Naive thymus-derived CD8-positive, alpha-beta T cell (primary cell): ENCODE measurements at regions of chr14 and their contacts with region 1.

Region 1: DNA sequence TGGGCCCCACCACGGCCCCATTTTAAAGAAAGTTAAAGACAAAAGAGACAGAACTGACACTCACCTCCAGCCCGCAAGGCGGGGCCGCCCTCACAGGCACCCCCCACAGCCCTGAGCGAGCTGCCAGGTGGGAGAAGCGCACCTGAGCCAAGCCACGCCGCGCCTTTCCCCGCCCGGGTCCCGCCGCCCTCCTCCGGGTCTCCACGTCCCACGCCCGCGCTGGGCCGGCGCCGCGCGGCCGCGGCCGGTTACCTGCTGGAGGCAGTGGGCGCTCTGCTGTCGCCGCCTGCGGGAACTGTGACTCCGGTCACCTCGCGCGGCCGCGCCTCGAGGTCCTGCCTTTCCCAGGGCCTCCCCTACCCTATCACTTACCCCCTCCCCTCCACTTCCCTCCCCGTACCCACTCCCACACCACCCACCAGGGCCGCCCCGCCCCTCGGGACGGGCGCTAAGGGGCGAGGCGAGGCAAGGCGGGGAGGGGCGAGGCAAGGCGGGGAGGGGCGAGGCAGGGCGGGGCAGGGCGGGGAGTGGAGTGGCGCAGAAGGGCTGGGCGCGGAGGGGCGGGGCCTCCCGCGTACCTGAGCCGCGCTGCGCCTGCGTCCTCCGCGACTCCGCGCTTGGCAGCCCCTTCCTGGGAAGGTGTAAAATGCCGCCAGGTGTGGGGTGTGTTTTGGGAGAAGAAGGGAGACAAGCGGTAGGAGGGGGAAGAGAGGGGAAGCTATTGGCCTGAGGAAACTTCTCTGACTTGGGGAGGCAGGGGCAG is 31.0 kb downstream of the TC2N start:
- DNase-seq: peak; percentile 74 to 98 (median 86)
- ATAC-seq: peak; percentile 77 to 89
- H3K4me3 Mint-ChIP-seq: peak overlapping the region; percentile 78 to 94 (median 90)
- H3K27ac Mint-ChIP-seq: peak overlapping the region; percentile 74 to 96 (median 92)
- H3K4me1 Mint-ChIP-seq: peaks cover 28 to 81% (median 74%) of the 10 kb centered on the region in 4 donors
- H3K27me3 Mint-ChIP-seq: no peaks in the 10 kb centered on the region

Region 2: GRCh38 chr14:91595736-91596135 is 240.6 kb before region 1 on chr14:
- POLR2A ChIA-PET with region 1: no interaction called
- DNase-seq: no peak
- ATAC-seq: no peak
- H3K4me3 Mint-ChIP-seq: no peak overlapping the region
- H3K27ac Mint-ChIP-seq: no peak overlapping the region
- H3K4me1 Mint-ChIP-seq: no peaks in the 10 kb centered on the region
- H3K27me3 Mint-ChIP-seq: peaks cover 0 to 4% (median 0%) of the 10 kb centered on the region in 5 donors

Region 3: DNA sequence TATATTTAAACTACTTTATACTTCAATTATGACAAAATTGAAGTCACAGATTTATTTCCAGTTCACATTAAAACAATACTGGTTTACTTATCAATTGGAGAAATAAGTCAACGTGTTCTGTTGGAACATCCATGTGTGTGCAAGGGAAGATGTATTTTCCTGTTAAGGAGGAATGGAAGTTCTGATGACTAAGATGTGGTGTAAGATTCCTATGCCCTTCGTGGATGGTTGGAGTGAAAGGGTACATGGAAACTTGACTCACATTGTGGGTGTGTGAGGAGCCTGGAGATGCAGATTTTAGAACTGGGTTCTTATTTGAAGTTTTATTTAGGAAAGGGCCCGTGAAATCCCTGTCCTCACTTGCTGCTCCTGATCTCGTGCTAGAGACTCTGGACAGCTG is 199.7 kb before region 1 on chr14:
- POLR2A ChIA-PET with region 1: no interaction called
- DNase-seq: no peak
- ATAC-seq: no peak
- H3K4me3 Mint-ChIP-seq: no peak overlapping the region
- H3K27ac Mint-ChIP-seq: no peak overlapping the region
- H3K4me1 Mint-ChIP-seq: no peaks in the 10 kb centered on the region
- H3K27me3 Mint-ChIP-seq: no peaks in the 10 kb centered on the region

Region 4: DNA sequence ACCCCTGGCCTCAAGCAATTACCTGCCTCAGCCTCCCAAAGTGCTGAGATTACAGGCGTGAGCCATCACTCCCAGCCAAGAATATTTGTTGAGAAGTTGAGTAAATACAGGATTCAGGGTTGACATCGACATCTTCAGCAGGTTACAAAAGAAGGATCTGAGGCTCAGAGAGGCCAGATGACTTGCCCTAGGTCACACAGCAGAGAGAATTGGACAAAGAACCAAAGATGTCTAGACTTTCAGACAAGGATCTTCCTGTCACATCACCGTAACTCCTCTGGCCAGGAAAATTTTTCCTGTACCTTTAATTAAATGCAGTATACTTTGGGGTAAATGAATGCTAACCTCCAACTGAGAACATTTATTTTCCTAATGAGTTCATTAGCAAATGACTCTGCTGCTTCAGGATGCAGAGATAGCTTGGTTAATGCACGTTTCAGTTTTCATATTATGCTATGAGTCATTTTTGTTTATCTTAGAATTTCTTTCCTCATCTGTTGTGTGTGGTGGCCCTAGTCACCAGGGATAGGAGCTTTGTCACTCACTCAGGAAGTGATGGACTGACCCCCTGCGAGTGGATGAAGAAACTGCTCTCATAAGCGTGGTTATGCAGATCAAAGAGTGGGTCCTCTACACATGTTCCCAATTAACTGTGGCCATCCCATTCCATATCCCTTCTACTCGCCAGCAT is 22.1 kb after region 1 on chr14:
- POLR2A ChIA-PET with region 1: interaction called, 66 read pairs
- DNase-seq: no peak
- ATAC-seq: no peak
- H3K4me3 Mint-ChIP-seq: peak overlapping the region in 9 of 10 donors; percentile 27 to 82 (median 48)
- H3K27ac Mint-ChIP-seq: peak overlapping the region in 9 of 10 donors; percentile 20 to 98 (median 91)
- H3K4me1 Mint-ChIP-seq: peaks cover 52 to 92% (median 91%) of the 10 kb centered on the region in 4 donors
- H3K27me3 Mint-ChIP-seq: no peaks in the 10 kb centered on the region

Region 5: DNA sequence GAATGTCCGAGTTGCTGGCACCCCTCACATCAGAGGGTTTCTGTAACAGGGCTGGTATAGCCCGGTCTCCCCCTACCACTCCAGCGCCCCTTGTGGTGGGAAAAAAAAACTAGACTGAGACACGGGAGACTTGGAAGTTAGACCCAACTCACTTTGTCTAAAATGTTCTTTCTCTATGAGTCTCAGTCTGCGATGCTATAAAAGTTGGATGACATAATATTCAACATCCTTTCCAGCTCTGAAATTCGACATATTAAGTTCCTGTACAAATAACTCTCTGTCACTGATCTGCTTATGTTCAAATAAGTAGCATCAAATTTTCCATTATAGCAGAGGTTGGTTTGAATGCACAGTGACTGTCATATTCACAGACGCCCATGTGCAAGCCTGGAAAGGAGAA is 56.7 kb after region 1 on chr14:
- POLR2A ChIA-PET with region 1: interaction called, 14 read pairs
- DNase-seq: peak in 1 of 10 donors; percentile 23
- ATAC-seq: no peak
- H3K4me3 Mint-ChIP-seq: peak overlapping the region in 1 of 10 donors; percentile 8
- H3K27ac Mint-ChIP-seq: peak overlapping the region; percentile 23 to 95 (median 74)
- H3K4me1 Mint-ChIP-seq: peaks cover 38 to 79% (median 61%) of the 10 kb centered on the region in 4 donors
- H3K27me3 Mint-ChIP-seq: no peaks in the 10 kb centered on the region